ENCODE measurements at regions of chr11 and their contacts with region 1.

Region 1: DNA sequence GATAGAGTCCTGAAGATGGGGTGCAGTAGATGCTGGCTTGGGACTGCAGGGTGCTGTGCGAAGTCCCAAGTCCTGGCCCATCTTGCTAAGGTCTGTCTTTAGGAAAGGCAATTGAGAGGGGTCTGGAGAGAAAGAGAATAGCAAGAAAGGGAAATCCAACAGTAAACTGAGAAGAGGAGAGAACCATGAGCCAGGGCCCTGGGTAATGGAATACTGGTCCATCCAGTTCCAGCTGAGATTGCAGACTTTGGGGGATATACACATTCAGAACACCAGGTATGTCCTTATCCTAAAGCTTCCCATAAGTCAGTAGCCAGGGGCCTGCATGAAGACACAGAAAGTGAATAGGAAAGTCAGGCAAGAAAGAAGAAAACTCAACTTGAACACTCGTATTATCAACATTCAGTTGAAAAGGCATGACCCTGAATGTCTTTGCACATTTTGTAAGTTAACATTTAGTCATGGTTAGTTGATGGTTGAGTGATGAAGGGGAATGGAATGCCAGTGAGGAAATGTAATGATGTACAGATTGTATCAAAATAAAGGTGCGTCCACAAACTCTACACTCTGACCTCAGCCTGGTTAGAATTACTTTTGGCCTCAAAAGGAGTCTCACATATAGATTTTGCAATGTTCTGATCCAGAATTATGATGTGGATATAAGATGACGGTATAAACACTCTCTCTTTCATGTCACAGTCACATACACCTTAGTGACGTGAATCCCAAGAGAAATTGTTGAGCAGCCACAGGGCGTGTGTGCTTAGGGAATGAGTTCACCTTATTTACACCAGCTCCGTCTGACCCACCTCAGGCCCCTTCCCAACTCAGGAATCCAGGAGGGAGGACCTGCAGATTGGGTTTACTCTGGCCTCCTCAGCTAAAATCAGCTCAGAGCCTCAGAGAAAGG is 100.3 kb downstream of the RDX start:
- DNase-seq: no peak
- ATAC-seq: no peak
- H3K4me3 ChIP-seq: no peak overlapping the region
- H3K27ac ChIP-seq: no peak overlapping the region
- H3K4me1 ChIP-seq: no peaks in the 10 kb centered on the region; a peak in 1 of 5 replicates
- H3K27me3 ChIP-seq: no peaks in the 10 kb centered on the region
- CTCF ChIP-seq: no peak
- EP300 ChIP-seq: no peak
- POLR2A ChIP-seq: no peak
- RAD21 ChIP-seq: no peak

Region 2: GRCh38 chr11:109853156-109853776 is 342.8 kb before region 1 on chr11:
- CTCF ChIA-PET with region 1: interaction called, 3 read pairs
- POLR2A ChIA-PET with region 1: no interaction called
- in situ Hi-C with region 1: no loop called
- intact Hi-C with region 1: loop called (anchors 10 kb)
- DNase-seq: peak; percentile 13 to 60 (median 26)
- ATAC-seq: peak; percentile 85
- H3K4me3 ChIP-seq: no peak overlapping the region
- H3K27ac ChIP-seq: no peak overlapping the region
- H3K4me1 ChIP-seq: peaks cover 0 to 3% of the 10 kb centered on the region in 2 experiments; a peak in 1 of 5 replicates
- H3K27me3 ChIP-seq: no peaks in the 10 kb centered on the region
- CTCF ChIP-seq: peak; percentile 57 to 88 (median 63)
- EP300 ChIP-seq: no peak
- POLR2A ChIP-seq: no peak
- RAD21 ChIP-seq: peak; percentile 91 to 97

Region 3: GRCh38 chr11:110173811-110174644 is 22.1 kb before region 1 on chr11:
- CTCF ChIA-PET with region 1: no interaction called
- POLR2A ChIA-PET with region 1: no interaction called
- in situ Hi-C with region 1: no loop called
- intact Hi-C with region 1: loop called (anchors 2 kb)
- DNase-seq: peak; percentile 72 to 79 (median 75)
- ATAC-seq: peak; percentile 95
- H3K4me3 ChIP-seq: no peak overlapping the region
- H3K27ac ChIP-seq: no peak overlapping the region
- H3K4me1 ChIP-seq: no peaks in the 10 kb centered on the region; a peak in 1 of 5 replicates
- H3K27me3 ChIP-seq: no peaks in the 10 kb centered on the region
- CTCF ChIP-seq: peak; percentile 81 to 92 (median 81)
- EP300 ChIP-seq: no peak
- POLR2A ChIP-seq: no peak
- RAD21 ChIP-seq: peak; percentile 40 to 57

Region 4: GRCh38 chr11:110268441-110268840 is 72.3 kb after region 1 on chr11:
- CTCF ChIA-PET with region 1: no interaction called
- POLR2A ChIA-PET with region 1: no interaction called
- in situ Hi-C with region 1: no loop called
- intact Hi-C with region 1: no loop called
- DNase-seq: no peak
- ATAC-seq: no peak
- H3K4me3 ChIP-seq: no peak overlapping the region
- H3K27ac ChIP-seq: no peak overlapping the region
- H3K4me1 ChIP-seq: no peaks in the 10 kb centered on the region; a peak in 1 of 5 replicates
- H3K27me3 ChIP-seq: no peaks in the 10 kb centered on the region
- CTCF ChIP-seq: no peak
- EP300 ChIP-seq: no peak
- POLR2A ChIP-seq: no peak
- RAD21 ChIP-seq: no peak

Region 5: DNA sequence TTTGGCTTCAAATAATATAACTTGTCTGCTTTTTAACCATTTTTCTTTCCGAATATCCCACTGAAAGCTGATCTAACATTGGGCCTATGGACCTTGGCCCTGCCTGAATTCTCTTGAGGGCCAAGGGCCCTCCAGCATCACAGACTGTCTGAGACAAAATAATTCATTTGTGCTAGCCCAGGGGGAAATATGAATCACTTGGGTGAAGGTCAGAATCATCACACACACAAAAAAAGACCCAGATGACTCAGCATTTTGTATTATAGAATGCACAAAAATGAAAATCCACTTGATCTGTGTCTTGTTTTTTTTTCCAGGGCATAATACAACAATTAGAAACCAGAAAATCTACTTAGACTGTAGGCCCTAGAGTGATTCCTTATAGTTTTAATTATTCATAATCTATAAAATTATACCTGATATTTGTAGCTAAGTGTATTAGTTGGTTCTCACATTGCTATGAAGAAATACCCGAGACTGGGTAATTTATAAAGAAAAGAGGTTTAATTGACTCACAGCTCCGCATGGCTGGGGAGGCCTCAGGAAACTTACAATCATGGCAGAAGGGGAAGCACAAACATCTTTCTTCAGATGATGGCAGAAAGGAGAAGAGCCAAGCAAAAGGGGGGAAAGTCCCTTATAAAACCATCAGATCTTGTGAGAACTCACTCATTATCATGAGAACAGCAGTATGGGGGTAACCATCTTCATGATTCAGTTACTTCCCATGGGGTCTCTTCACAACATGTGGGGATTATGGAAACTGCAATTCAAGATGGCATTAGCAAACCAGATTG is 115.9 kb after region 1 on chr11:
- CTCF ChIA-PET with region 1: no interaction called
- POLR2A ChIA-PET with region 1: no interaction called
- in situ Hi-C with region 1: no loop called
- intact Hi-C with region 1: no loop called
- DNase-seq: peak in 3 of 4 experiments; percentile 19 to 41 (median 29)
- ATAC-seq: peak; percentile 47; the same call in 2 of the 3 replicates
- H3K4me3 ChIP-seq: no peak overlapping the region
- H3K27ac ChIP-seq: no peak overlapping the region
- H3K4me1 ChIP-seq: peaks cover 0 to 8% of the 10 kb centered on the region in 2 experiments; a peak in 2 of 5 replicates
- H3K27me3 ChIP-seq: no peaks in the 10 kb centered on the region
- CTCF ChIP-seq: no peak
- EP300 ChIP-seq: peak; percentile 34; the same call in 1 of the 2 replicates
- POLR2A ChIP-seq: no peak
- RAD21 ChIP-seq: no peak

Region 6: GRCh38 chr11:110376711-110377324 is 180.7 kb after region 1 on chr11:
- CTCF ChIA-PET with region 1: interaction called, 8 read pairs
- POLR2A ChIA-PET with region 1: interaction called, 3 read pairs
- in situ Hi-C with region 1: no loop called
- intact Hi-C with region 1: loop called (anchors 1 kb)
- DNase-seq: peak; percentile 52 to 75 (median 54)
- ATAC-seq: peak; percentile 88
- H3K4me3 ChIP-seq: no peak overlapping the region
- H3K27ac ChIP-seq: no peak overlapping the region
- H3K4me1 ChIP-seq: peaks cover 0 to 9% of the 10 kb centered on the region in 2 experiments; a peak in 1 of 5 replicates
- H3K27me3 ChIP-seq: no peaks in the 10 kb centered on the region
- CTCF ChIP-seq: peak; percentile 69 to 83 (median 71); a peak in 5 of 6 replicates
- EP300 ChIP-seq: no peak
- POLR2A ChIP-seq: no peak
- RAD21 ChIP-seq: peak; percentile 78 to 88

Region 7: GRCh38 chr11:110525883-110526282 is 329.8 kb after region 1 on chr11:
- CTCF ChIA-PET with region 1: no interaction called
- POLR2A ChIA-PET with region 1: no interaction called
- in situ Hi-C with region 1: no loop called
- intact Hi-C with region 1: loop called (anchors 10 kb)
- DNase-seq: peak in 1 of 4 experiments; percentile 1
- ATAC-seq: no peak
- H3K4me3 ChIP-seq: no peak overlapping the region
- H3K27ac ChIP-seq: no peak overlapping the region
- H3K4me1 ChIP-seq: no peaks in the 10 kb centered on the region
- H3K27me3 ChIP-seq: no peaks in the 10 kb centered on the region
- CTCF ChIP-seq: no peak
- EP300 ChIP-seq: no peak
- POLR2A ChIP-seq: no peak
- RAD21 ChIP-seq: no peak

Region 8: GRCh38 chr11:111446404-111447111 is 1250.5 kb after region 1 on chr11:
- CTCF ChIA-PET with region 1: interaction called, 6 read pairs
- POLR2A ChIA-PET with region 1: no interaction called
- in situ Hi-C with region 1: no loop called
- intact Hi-C with region 1: loop called (anchors 5 kb)
- DNase-seq: peak; percentile 78 to 84 (median 82)
- ATAC-seq: peak; percentile 99
- H3K4me3 ChIP-seq: no peak overlapping the region
- H3K27ac ChIP-seq: no peak overlapping the region
- H3K4me1 ChIP-seq: no peaks in the 10 kb centered on the region
- H3K27me3 ChIP-seq: peaks cover 0 to 11% of the 10 kb centered on the region in 2 experiments; a peak in 2 of 5 replicates
- CTCF ChIP-seq: peak; percentile 86 to 89 (median 89)
- EP300 ChIP-seq: no peak
- POLR2A ChIP-seq: no peak
- RAD21 ChIP-seq: peak; percentile 91 to 92

Measured in K562 (cell line).